Cardiac septum (tissue), 1 donor: ENCODE measurements at regions of chr1 and their contacts with region 1.

Region 1: GRCh38 chr1:233722212-233722979 is 108.5 kb downstream of the KCNK1 start:
- DNase-seq: no peak

Region 2: DNA sequence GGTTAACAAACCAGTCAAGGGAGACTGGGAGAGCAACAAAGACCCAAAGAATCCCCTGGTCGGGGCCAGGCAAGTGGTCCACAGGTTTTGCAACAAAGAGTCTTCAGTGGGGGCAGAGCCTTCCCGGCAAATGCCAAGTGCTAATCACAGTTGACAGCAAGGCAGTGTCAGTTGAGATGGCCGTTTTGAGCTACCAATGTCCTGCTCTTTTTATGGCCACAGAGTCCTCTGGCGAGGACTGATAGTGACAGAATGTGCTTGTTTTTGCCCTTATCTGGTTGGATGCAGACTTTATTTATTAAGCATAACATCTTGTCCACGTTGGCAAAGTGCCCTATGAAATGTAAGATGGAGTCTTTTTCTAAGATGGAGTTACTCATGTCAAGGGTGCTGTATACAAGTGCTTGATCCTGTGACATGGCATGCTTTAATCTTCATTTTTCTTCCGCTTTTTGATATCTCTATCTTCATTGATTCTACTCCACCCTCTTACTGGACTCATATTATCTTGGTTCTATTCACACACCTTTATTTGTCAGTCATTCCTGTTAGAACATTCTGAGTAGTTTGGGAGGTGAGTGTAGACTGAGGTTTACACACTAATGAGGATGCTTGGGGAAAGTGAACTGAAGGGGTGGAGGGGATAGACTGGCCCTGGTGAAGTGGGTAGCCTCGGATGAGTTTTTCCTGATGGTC is 56.7 kb before region 1 on chr1:
- intact Hi-C with region 1: loop called (anchors 2 kb)
- DNase-seq: no peak

Region 3: DNA sequence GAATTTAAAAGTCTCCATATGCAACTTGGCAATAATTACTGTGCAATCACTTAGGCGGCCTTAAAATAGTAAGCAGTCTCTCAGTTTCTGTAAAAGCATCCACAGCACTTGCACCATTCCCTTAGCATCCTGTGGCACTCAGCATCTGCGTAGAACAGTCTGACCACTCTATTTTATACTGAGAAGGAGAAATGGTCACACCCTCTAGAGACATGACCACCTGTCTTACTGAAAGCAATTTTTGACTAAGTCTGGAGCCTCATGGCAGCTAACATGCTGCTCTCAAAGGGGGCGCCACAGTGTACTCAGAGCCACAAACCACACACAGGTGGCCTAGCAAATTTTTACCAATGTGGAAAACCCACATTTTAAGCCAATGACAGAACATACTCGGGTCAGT is 46.5 kb before region 1 on chr1:
- intact Hi-C with region 1: no loop called
- DNase-seq: no peak